SK-N-SH (cell line): ENCODE measurements at regions of chr2 and their contacts with region 1.

Region 1: GRCh38 chr2:157302492-157303099 is 23.0 kb downstream of the ERMN start:
- DNase-seq: peak; percentile 37
- H3K4me3 ChIP-seq: peak overlapping the region in 1 of 2 experiments; percentile 14; a peak in 1 of 4 replicates
- H3K27ac ChIP-seq: no peak overlapping the region
- H3K4me1 ChIP-seq: 0 out of 4 replicates have a peak, but pooled peaks cover 0 to 3% of the 10 kb centered on the region in 2 experiments
- H3K27me3 ChIP-seq: no peaks in the 10 kb centered on the region
- CTCF ChIP-seq: peak; percentile 88
- EP300 ChIP-seq: no peak
- RAD21 ChIP-seq: peak; percentile 81

Region 2: GRCh38 chr2:157221394-157221988 is 81.1 kb before region 1 on chr2:
- CTCF ChIA-PET with region 1: no interaction called
- POLR2A ChIA-PET with region 1: no interaction called
- DNase-seq: no peak
- H3K4me3 ChIP-seq: no peak overlapping the region
- H3K27ac ChIP-seq: no peak overlapping the region
- H3K4me1 ChIP-seq: no peaks in the 10 kb centered on the region; a peak in 1 of 4 replicates
- H3K27me3 ChIP-seq: no peaks in the 10 kb centered on the region
- CTCF ChIP-seq: no peak
- EP300 ChIP-seq: no peak
- RAD21 ChIP-seq: no peak

Region 3: GRCh38 chr2:157233506-157233905 is 69.1 kb before region 1 on chr2:
- CTCF ChIA-PET with region 1: no interaction called
- POLR2A ChIA-PET with region 1: no interaction called
- DNase-seq: no peak
- H3K4me3 ChIP-seq: no peak overlapping the region
- H3K27ac ChIP-seq: peak overlapping the region in 1 of 2 experiments; percentile 72; a peak in 3 of 4 replicates
- H3K4me1 ChIP-seq: peaks cover 0 to 5% of the 10 kb centered on the region in 2 experiments; a peak in 1 of 4 replicates
- H3K27me3 ChIP-seq: no peaks in the 10 kb centered on the region
- CTCF ChIP-seq: no peak
- EP300 ChIP-seq: peak in 1 of 2 experiments; percentile 49; a peak in 2 of 4 replicates
- RAD21 ChIP-seq: no peak

Region 4: GRCh38 chr2:157287160-157287559 is 15.4 kb before region 1 on chr2:
- CTCF ChIA-PET with region 1: interaction called, 19 read pairs
- POLR2A ChIA-PET with region 1: no interaction called
- DNase-seq: no peak
- H3K4me3 ChIP-seq: no peak overlapping the region
- H3K27ac ChIP-seq: no peak overlapping the region
- H3K4me1 ChIP-seq: no peaks in the 10 kb centered on the region
- H3K27me3 ChIP-seq: no peaks in the 10 kb centered on the region
- CTCF ChIP-seq: no peak
- EP300 ChIP-seq: no peak
- RAD21 ChIP-seq: no peak

Region 5: GRCh38 chr2:157321466-157321865 is 18.9 kb after region 1 on chr2:
- CTCF ChIA-PET with region 1: interaction called, 35 read pairs
- POLR2A ChIA-PET with region 1: no interaction called
- DNase-seq: no peak
- H3K4me3 ChIP-seq: no peak overlapping the region
- H3K27ac ChIP-seq: no peak overlapping the region
- H3K4me1 ChIP-seq: no peaks in the 10 kb centered on the region
- H3K27me3 ChIP-seq: peaks cover 24% of the 10 kb centered on the region; the same call in 1 of the 2 replicates
- CTCF ChIP-seq: no peak
- EP300 ChIP-seq: no peak
- RAD21 ChIP-seq: no peak

Region 6: GRCh38 chr2:157327621-157328500 is 25.3 kb after region 1 on chr2:
- CTCF ChIA-PET with region 1: interaction called, 35 read pairs
- POLR2A ChIA-PET with region 1: no interaction called
- DNase-seq: peak; percentile 53
- H3K4me3 ChIP-seq: 0 out of 4 replicates have a peak overlapping the region, but pooled peaks of 1 of the 2 experiments have one; percentile 22
- H3K27ac ChIP-seq: no peak overlapping the region
- H3K4me1 ChIP-seq: no peaks in the 10 kb centered on the region
- H3K27me3 ChIP-seq: peaks cover 31% of the 10 kb centered on the region; the same call in 1 of the 2 replicates
- CTCF ChIP-seq: peak; percentile 89
- EP300 ChIP-seq: no peak
- RAD21 ChIP-seq: peak; percentile 57